ENCODE measurements at regions of chr21 and their contacts with region 1.

Region 1: DNA sequence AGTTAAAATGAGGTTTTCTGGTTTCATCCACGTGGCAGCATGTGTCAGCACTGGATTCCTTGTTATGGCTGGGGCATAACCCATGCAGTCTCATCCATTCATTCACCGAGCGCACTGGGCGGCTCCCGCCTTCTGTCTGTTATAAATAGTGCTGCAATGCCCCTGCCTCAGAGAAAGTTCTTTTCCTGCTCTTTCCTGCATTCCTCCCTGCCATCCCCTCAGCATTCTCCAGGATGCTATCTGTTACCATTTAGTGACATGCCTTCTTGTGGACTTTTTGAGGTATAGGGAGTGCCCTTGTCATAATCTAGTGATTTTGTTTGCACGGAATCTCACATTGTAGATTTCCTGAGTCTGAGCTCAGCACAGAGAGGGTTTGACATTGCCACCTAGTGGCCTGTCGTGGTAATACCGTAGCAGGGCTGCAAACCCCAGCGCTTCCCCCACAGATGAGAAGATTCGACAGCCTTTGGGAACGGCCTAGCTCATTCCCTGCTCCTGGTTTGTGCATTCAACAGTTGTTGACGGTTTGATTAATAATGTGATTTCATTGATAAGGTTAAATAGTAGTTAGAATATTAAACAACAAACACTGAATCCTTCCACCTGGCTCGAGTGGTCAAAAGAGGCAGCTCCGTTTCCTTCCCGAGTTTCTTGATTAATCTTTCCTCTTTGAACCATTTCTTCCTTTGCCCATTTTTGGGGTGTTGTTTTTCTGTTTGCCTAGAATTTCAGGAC is 46.3 kb downstream of the UMODL1 start:
- H3K4me3 Mint-ChIP-seq: peak overlapping the region; percentile 49
- H3K27ac Mint-ChIP-seq: peak overlapping the region; percentile 1
- H3K4me1 Mint-ChIP-seq: peaks cover 57% of the 10 kb centered on the region
- H3K27me3 Mint-ChIP-seq: peaks cover 63% of the 10 kb centered on the region

Region 2: GRCh38 chr21:41816220-41817165 is 300.9 kb before region 1 on chr21:
- intact Hi-C with region 1: loop called (anchors 1 kb)
- H3K4me3 Mint-ChIP-seq: peak overlapping the region; percentile 41
- H3K27ac Mint-ChIP-seq: no peak overlapping the region
- H3K4me1 Mint-ChIP-seq: peaks cover 5% of the 10 kb centered on the region
- H3K27me3 Mint-ChIP-seq: no peaks in the 10 kb centered on the region

Region 3: GRCh38 chr21:41879190-41879998 is 238.0 kb before region 1 on chr21 and contains the start of gene PRDM15:
- intact Hi-C with region 1: loop called (anchors 5 kb)
- H3K4me3 Mint-ChIP-seq: peak within 1 kb of the TSS; percentile 82
- H3K27ac Mint-ChIP-seq: peak within 1 kb of the TSS; percentile 91
- H3K4me1 Mint-ChIP-seq: peaks cover 22% of the 10 kb centered on the region
- H3K27me3 Mint-ChIP-seq: no peaks in the 10 kb centered on the region

Region 4: DNA sequence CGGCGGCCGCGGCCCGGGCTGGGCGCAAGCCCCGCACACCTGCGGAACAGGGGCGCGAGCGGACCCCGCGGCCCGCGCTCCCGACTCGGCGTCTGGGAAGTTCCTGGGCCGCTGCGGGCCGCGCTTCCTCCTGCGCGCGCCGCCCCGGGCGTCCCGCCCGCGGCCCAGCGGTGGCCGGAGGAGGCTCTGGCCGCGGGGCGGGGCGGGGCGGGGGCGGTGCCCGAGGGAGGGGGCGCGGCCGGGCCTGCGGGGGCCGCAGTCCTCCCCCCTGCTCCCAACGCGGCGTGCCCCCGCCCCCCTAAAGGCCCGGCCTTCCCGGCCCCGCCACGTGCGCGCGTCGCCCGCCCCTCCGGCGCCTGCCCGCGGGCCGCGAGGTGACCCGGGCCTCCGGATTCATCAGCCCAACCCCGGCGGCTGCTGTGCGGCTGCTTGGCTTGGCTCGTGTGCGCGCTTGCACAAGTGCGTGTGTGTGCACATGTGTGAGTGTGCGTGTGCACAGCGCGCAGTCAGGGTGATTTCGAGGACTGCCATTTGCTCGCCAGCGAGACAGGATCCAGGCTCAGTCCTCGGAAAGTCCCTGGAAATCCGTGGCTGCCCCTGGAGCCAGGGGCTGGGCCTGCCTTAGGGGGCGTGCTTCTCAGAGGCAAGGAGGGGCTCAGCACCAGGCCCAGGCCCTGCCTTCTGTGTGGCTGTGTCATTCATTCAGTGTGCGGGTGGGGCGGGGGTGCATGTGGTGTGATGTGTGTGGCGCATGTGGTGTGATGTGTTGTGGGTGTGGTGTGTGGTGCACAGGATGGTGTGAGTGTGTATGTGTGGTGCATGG is 163.4 kb before region 1 on chr21 and contains the start of gene C2CD2:
- intact Hi-C with region 1: loop called (anchors 10 kb)
- H3K4me3 Mint-ChIP-seq: peak within 1 kb of the TSS; percentile 79
- H3K27ac Mint-ChIP-seq: peak within 1 kb of the TSS; percentile 73
- H3K4me1 Mint-ChIP-seq: peaks cover 55% of the 10 kb centered on the region
- H3K27me3 Mint-ChIP-seq: peaks cover 5% of the 10 kb centered on the region

Measured in dendritic cell treated with granulocyte-macrophage colony-stimulating factor and Interleukin-4, amounts not matched to agents 40 ng/mL and 50 ng/mL, for 4 days (primary cell).